Esophagus muscularis mucosa (tissue), 4 donors: ENCODE measurements at regions of chr1 and their contacts with region 1.

Region 1: GRCh38 chr1:24847995-24848881 is 81.8 kb downstream of the RUNX3 start:
- DNase-seq: peak; percentile 97
- H3K4me3 ChIP-seq: peak overlapping the region; percentile 61 to 62 (median 62)
- H3K27ac ChIP-seq: peak overlapping the region; percentile 65 to 80 (median 74)
- H3K4me1 ChIP-seq: peaks cover 7 to 25% (median 20%) of the 10 kb centered on the region in 4 donors
- H3K27me3 ChIP-seq: no peaks in the 10 kb centered on the region
- CTCF ChIP-seq: peak; percentile 89 to 93 (median 92)
- EP300 ChIP-seq: no peak
- POLR2A ChIP-seq: no peak

Region 2: DNA sequence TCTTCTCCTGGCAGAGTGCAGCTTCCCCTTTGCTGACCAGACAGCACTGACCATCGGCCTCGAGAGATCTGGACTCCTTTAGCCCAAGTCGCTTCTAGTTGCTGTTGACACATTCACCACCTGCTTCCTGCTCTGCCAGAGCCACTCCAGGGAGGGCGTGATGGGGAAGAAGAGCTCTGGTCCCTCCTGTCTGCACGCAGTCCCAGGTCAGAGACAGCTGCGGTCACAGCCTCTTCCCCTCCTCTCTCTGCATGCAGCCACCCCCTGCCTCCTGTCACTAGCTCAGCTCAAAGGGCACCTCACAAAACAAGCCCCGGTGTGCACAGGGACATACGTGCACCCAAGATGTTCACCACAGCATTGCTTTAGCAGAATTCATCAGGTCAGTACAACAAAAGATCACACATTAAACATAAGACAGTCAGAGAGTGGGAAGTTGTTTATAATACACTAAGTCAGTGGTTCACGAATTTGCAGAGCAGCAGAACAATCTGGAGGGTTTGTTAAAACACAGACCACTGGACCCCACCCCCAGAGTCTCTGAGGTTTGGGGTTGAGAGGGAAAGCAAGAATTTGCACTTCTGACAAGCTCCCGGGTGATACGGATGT is 251.2 kb after region 1 on chr1:
- intact Hi-C with region 1: loop called (anchors 5 kb)
- DNase-seq: no peak
- H3K4me3 ChIP-seq: no peak overlapping the region
- H3K27ac ChIP-seq: no peak overlapping the region
- H3K4me1 ChIP-seq: peaks cover 0 to 4% (median 0%) of the 10 kb centered on the region in 4 donors
- H3K27me3 ChIP-seq: peaks cover 0 to 33% (median 0%) of the 10 kb centered on the region in 4 donors
- CTCF ChIP-seq: no peak
- EP300 ChIP-seq: no peak
- POLR2A ChIP-seq: no peak

Region 3: DNA sequence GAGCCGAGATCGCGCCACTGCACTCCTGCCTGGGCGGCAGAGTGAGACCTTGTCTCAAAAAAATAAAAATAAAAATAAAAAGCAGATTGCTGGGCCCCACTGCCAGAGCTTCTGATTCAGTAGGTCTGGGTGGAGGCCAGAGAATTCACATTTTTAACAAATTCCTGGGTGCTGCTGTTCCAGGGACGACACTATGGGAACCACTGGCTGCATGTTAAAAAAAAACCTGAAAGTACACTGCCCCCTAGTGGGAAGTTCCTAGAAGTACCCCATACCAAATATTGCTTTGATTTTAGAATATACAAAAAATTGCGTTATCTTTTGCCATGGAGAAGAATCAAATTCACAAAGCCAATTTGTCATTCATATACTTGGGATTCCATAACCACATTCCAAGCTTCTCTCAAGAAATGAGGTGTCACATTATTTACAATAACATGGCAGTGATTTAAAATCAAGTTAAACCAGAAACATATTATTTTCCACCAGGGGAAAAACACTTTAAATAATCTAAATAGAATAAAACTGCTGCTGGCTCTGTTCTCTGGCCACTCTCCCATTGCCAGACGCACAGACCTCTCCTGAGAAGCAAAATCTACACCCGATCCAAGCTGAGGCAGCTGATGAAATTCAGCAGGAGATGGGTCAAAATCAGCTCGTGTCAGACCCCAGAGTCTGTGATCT is 356.7 kb after region 1 on chr1:
- intact Hi-C with region 1: loop called (anchors 5 kb)
- DNase-seq: no peak
- H3K4me3 ChIP-seq: no peak overlapping the region
- H3K27ac ChIP-seq: no peak overlapping the region
- H3K4me1 ChIP-seq: peaks cover 0 to 4% (median 0%) of the 10 kb centered on the region in 4 donors
- H3K27me3 ChIP-seq: peaks cover 0 to 13% (median 0%) of the 10 kb centered on the region in 4 donors
- CTCF ChIP-seq: peak; percentile 69 to 92 (median 78)
- EP300 ChIP-seq: no peak
- POLR2A ChIP-seq: no peak